GM23248 (cell line): ENCODE measurements at regions of chrX and their contacts with region 1.

Region 1: DNA sequence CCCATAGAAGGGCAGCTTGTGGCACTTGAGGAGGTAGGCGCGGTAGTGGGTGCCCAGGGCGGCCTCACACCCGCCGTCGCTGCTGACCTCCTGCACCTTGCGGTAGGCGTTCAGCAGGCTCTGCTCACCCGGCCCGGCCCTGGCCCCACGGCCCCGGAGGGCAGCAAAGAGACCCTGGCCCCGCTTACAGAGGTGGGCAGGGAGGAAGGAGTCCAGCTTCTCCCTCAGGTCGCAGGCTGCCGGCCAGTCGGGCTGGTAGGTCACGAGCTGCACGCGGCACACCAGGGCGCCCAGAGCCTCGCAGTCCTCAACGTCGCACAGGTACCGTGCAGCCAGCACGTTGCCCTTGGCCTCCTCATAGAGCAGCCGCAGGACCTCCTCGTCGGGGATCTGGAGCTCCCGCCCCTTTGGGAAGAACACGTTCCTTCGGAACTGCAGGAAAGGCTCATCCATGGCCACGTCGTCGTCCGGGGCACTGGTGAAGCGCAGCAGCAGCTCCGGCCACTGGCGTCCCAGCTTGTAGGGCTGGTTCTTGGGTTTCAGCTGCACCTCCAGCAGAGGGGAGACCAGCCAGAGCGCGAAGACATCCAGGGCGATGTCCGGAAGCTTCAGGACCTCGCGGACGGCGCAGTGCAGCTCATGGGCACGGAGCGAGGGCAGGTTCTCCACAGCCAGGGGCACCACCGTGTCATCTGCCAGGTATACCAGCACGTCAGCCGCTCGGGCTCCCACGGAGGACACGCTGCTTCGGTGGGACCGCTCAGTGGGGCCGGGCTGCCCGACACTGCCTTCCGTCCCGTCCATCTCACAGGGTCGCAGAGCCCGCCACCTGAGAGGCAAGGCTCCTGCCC is 17.1 kb upstream of the LAS1L start:
- DNase-seq: no peak
- H3K4me3 ChIP-seq: no peak overlapping the region
- H3K27ac ChIP-seq: no peak overlapping the region
- H3K4me1 ChIP-seq: no peaks in the 10 kb centered on the region
- H3K27me3 ChIP-seq: no peaks in the 10 kb centered on the region

Region 2: GRCh38 chrX:64437665-64438064 is 1114.0 kb before region 1 on chrX:
- in situ Hi-C with region 1: no loop called
- DNase-seq: no peak
- H3K4me3 ChIP-seq: no peak overlapping the region
- H3K27ac ChIP-seq: no peak overlapping the region
- H3K4me1 ChIP-seq: no peaks in the 10 kb centered on the region
- H3K27me3 ChIP-seq: no peaks in the 10 kb centered on the region

Region 3: DNA sequence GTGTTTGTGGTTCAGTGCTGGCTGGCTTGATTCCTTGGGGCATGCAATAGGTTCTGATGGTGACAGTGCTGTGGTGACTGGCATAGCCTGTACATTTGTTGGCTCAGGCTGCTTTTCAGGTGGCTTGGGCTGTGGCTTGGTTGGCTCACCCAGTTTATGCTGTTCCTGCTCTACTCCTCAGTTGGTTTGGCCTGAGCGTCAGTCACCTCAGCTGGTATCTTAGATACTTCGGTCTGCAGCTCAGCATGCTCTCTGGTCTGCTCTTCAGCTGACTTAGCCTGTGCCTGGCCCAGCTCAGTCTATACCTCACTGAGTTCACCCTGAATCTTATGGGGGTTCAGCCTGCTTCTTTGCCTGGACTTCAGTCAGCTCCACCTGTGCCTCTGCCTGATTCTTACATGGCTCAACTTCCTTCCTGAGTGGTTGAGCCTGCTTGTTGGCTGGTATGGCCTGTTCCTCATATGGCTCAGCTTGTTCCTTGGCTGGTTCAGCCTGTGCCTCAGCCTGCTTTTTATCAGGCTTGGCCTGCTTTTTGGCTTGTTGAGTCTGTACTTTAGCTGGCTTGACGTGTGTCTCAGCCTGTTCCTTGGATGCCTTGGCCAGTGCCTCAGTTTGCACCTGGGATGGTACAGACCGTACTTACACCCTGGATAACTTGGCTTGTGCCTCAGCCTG is 286.3 kb after region 1 on chrX:
- in situ Hi-C with region 1: loop called (anchors 25 kb)
- DNase-seq: no peak
- H3K4me3 ChIP-seq: no peak overlapping the region
- H3K27ac ChIP-seq: no peak overlapping the region
- H3K4me1 ChIP-seq: no peaks in the 10 kb centered on the region
- H3K27me3 ChIP-seq: no peaks in the 10 kb centered on the region

Region 4: GRCh38 chrX:66163849-66164411 is 612.2 kb after region 1 on chrX and contains the start of gene HEPH:
- in situ Hi-C with region 1: loop called (anchors 25 kb)
- DNase-seq: peak; percentile 63
- H3K4me3 ChIP-seq: peak within 1 kb of the TSS; percentile 71
- H3K27ac ChIP-seq: peak within 1 kb of the TSS; percentile 41
- H3K4me1 ChIP-seq: peaks cover 11% of the 10 kb centered on the region
- H3K27me3 ChIP-seq: no peaks in the 10 kb centered on the region
- total RNA-seq, gene HEPH: 28.2 and 42.4 TPM in 2 replicates

Region 5: GRCh38 chrX:66437719-66438118 is 886.0 kb after region 1 on chrX:
- in situ Hi-C with region 1: loop called (anchors 25 kb)
- DNase-seq: no peak
- H3K4me3 ChIP-seq: no peak overlapping the region
- H3K27ac ChIP-seq: no peak overlapping the region
- H3K4me1 ChIP-seq: no peaks in the 10 kb centered on the region
- H3K27me3 ChIP-seq: no peaks in the 10 kb centered on the region